Aorta (tissue), 5 donors: ENCODE measurements at regions of chr1 and their contacts with region 1.

Region 1: GRCh38 chr1:207963427-207964194 is 52.7 kb upstream of the CD34 start:
- DNase-seq: peak; percentile 92 to 96
- ATAC-seq: peak; percentile 92
- H3K4me3 ChIP-seq: peak overlapping the region; percentile 16 to 42
- H3K27ac ChIP-seq: peak overlapping the region; percentile 58 to 93
- H3K4me1 ChIP-seq: no peaks in the 10 kb centered on the region
- H3K27me3 ChIP-seq: no peaks in the 10 kb centered on the region

Region 2: DNA sequence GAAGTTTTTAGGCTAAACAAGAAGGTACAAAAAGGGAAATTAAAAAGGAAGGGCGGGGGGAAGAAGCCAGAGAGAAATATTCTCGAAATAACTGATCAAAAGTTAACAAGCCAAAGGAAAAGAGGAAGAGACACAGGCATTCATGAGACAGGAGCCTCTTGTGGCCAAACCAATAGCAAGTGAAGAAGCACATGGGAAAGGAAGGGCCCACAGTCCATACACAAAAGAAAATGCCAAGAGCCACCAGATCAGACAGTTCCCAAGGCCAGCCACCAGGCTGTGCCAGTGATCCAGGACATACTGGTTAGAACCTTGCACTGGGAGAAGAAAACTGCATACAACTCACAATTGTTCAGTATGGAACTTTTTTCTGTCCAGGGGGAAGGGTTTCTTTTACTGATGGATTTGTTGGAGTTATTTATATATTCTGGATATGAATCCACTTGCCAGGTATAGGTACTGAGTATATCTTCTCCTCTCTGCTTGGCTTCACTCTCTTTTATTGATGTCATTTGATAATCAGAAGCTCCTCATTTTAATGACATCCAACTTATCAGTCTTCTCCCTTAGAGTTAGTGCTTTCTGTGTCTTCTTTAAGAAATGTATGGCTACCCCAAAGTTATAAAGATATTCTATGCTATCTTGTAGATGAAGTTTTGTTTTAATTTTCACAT is 135.0 kb before region 1 on chr1:
- intact Hi-C with region 1: loop called (anchors 2 to 10 kb)
- DNase-seq: peak; percentile 87 to 89
- ATAC-seq: peak; percentile 63
- H3K4me3 ChIP-seq: no peak overlapping the region
- H3K27ac ChIP-seq: no peak overlapping the region
- H3K4me1 ChIP-seq: peaks cover 0 to 3% of the 10 kb centered on the region in 2 donors
- H3K27me3 ChIP-seq: no peaks in the 10 kb centered on the region

Region 3: GRCh38 chr1:207885129-207886032 is 78.2 kb before region 1 on chr1:
- intact Hi-C with region 1: loop called (anchors 1 to 2 kb)
- DNase-seq: peak; percentile 90 to 94
- ATAC-seq: peak; percentile 93
- H3K4me3 ChIP-seq: no peak overlapping the region
- H3K27ac ChIP-seq: no peak overlapping the region
- H3K4me1 ChIP-seq: peaks cover 0 to 5% of the 10 kb centered on the region in 2 donors
- H3K27me3 ChIP-seq: no peaks in the 10 kb centered on the region

Region 4: DNA sequence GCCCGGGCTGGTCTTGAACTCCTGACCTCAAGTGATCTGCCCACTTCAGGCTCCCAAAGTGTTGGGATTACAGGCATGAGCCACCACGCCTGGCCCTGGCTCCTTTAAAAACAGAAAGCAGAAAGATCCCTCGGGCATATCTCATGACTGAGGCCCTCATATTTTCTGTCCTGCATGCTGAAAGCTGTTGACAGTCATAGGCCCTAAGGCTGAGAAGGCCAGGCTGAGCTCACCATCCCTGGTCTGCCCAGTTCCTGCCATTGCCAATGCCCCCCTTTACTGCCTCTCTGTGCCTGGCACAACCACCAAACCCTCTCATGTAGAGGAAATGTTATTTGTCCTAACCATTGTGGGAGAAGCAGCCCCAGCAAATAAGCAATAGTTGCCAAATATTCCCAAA is 65.4 kb before region 1 on chr1:
- intact Hi-C with region 1: loop called in 1 of 2 experiments (anchors 2 kb)
- DNase-seq: no peak
- ATAC-seq: no peak
- H3K4me3 ChIP-seq: no peak overlapping the region
- H3K27ac ChIP-seq: no peak overlapping the region
- H3K4me1 ChIP-seq: peaks cover 0 to 6% of the 10 kb centered on the region in 2 donors
- H3K27me3 ChIP-seq: no peaks in the 10 kb centered on the region